OCI-LY7 (cell line): ENCODE measurements at regions of chr9 and their contacts with region 1.

Region 1: GRCh38 chr9:19456996-19457692 is 48.3 kb downstream of the ACER2 start:
- DNase-seq: peak; percentile 68
- H3K4me3 ChIP-seq: peak overlapping the region; percentile 41
- H3K27ac ChIP-seq: no peak overlapping the region
- H3K4me1 ChIP-seq: peaks cover 4% of the 10 kb centered on the region
- CTCF ChIP-seq: peak; percentile 96

Region 2: DNA sequence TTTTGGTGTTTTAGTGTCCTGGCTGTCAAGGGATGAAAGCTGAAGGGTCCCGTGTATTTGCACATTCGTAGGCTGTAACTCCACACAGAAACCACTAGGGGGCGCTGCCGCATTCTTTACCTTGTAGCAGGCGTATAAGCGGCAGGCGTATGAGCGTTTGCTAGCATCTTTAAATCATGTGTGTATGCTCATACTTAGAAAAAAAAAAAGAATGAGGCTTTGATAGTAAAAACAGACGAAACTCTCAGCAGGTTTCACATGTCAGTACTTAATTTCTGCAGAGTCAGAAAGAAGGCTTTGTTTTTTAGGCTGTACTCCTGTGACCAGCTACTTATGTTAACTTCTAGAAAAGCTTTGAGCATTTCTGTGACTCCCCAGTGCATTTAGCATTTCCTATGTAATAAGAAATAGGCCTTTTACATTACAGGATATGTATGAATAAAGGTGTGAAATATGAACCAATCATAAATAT is 1202.0 kb before region 1 on chr9:
- CTCF ChIA-PET with region 1: no interaction called
- POLR2A ChIA-PET with region 1: no interaction called
- intact Hi-C with region 1: loop called (anchors 2 kb)
- DNase-seq: peak; percentile 79
- H3K4me3 ChIP-seq: no peak overlapping the region
- H3K27ac ChIP-seq: no peak overlapping the region
- H3K4me1 ChIP-seq: no peaks in the 10 kb centered on the region
- CTCF ChIP-seq: peak; percentile 98

Region 3: GRCh38 chr9:19048966-19049916 is 407.9 kb before region 1 on chr9 and contains the start of gene RRAGA:
- CTCF ChIA-PET with region 1: interaction called, 7 read pairs
- POLR2A ChIA-PET with region 1: no interaction called
- intact Hi-C with region 1: loop called (anchors 1 kb)
- DNase-seq: peak; percentile 97
- H3K4me3 ChIP-seq: peak within 1 kb of the TSS; percentile 78
- H3K27ac ChIP-seq: peak within 1 kb of the TSS; percentile 87
- H3K4me1 ChIP-seq: peaks cover 28% of the 10 kb centered on the region
- CTCF ChIP-seq: peak; percentile 89
- total RNA-seq, gene RRAGA: 16.4 and 25.9 TPM in 2 replicates

Region 4: GRCh38 chr9:19085295-19085694 is 371.8 kb before region 1 on chr9:
- CTCF ChIA-PET with region 1: no interaction called
- POLR2A ChIA-PET with region 1: interaction called, 3 read pairs
- intact Hi-C with region 1: loop called (anchors 5 kb)
- DNase-seq: peak; percentile 27
- H3K4me3 ChIP-seq: no peak overlapping the region
- H3K27ac ChIP-seq: no peak overlapping the region
- H3K4me1 ChIP-seq: no peaks in the 10 kb centered on the region
- CTCF ChIP-seq: peak; percentile 78

Region 5: DNA sequence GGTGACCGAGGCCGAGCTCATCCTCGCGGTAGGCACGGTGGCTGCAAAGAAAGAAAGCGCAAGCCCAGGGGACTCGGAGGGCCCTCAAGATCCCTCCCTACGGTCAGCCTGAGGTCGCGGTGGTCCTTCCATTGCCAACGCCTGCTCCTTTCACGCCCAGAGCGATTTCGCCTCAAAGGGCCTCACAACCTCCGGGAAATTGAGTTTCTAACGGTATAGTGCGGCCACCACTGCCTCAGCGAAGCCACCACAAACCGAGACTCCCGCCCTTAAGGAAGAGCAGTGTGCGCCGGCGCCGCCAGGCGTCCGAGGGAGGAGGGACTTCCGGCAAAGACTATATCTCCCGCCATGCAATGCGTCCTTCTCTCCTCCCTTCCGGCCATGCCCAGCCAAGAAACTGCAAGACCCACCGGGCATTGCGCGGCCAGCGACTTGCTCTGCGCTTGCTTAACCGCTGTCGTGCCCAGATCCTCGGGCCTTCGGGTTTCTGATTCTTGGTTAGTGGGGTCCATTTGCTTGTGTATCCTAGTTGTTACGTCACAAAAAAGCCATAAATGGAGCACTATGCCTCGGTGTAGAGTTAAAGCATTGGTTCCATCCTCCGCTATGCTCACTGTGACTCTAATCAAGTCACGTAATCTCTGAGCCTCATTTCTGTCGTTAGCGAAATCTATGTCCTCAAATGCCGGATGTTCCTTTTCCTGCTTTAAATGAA is 354.4 kb before region 1 on chr9 and contains the start of gene HAUS6:
- CTCF ChIA-PET with region 1: no interaction called
- POLR2A ChIA-PET with region 1: interaction called, 3 read pairs
- intact Hi-C with region 1: loop called (anchors 5 kb)
- DNase-seq: peak; percentile 96
- H3K4me3 ChIP-seq: peak within 1 kb of the TSS; percentile 84
- H3K27ac ChIP-seq: peak within 1 kb of the TSS; percentile 75
- H3K4me1 ChIP-seq: peaks cover 21% of the 10 kb centered on the region
- CTCF ChIP-seq: no peak
- total RNA-seq, gene HAUS6: 25.7 and 32.8 TPM in 2 replicates

Region 6: DNA sequence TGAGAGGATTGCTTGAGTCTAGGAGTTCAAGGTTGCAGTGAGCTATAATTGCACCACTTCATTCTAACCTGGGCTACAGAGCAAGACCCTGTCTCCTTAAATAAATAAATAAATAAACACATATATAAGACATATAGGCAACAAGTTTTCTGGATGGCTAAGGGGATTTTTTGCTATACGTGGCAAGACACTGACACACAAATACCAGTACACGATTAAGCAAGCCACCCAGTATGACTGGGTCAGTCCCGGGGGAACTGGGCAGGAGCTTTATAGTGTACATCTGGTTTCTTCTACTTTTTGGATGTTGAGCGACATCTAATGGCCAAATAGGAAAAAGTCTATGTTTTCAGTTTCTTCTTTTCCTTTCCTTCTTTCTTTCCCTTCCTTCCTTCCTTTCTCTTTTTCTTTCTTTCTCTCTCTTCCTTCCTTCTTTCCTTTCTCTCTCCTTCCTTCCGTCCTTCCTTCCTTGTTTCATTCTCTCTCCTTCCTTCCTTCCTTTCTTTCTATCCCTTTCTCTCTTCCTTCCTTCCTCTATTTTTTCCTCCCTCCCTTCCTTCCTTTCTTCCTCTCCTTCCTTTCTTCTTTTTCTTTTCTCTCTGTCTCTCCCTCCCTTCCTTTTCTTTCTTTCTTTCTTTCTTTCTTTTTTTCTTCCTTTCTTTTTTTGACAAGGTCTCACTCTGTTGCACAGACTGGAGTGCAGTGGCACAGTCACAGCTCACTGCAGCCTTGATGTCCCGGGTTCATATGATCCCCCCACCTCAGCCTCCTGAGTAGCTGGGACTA is 282.8 kb before region 1 on chr9:
- CTCF ChIA-PET with region 1: no interaction called
- POLR2A ChIA-PET with region 1: interaction called, 5 read pairs
- intact Hi-C with region 1: loop called (anchors 2 kb)
- DNase-seq: peak; percentile 81
- H3K4me3 ChIP-seq: no peak overlapping the region
- H3K27ac ChIP-seq: no peak overlapping the region
- H3K4me1 ChIP-seq: peaks cover 20% of the 10 kb centered on the region
- CTCF ChIP-seq: peak; percentile 86

Region 7: GRCh38 chr9:19379697-19380046 is 77.5 kb before region 1 on chr9:
- CTCF ChIA-PET with region 1: no interaction called
- POLR2A ChIA-PET with region 1: interaction called, 3 read pairs
- intact Hi-C with region 1: loop called (anchors 1 kb)
- DNase-seq: peak; percentile 51
- H3K4me3 ChIP-seq: peak overlapping the region; percentile 96
- H3K27ac ChIP-seq: peak overlapping the region; percentile 75
- H3K4me1 ChIP-seq: peaks cover 42% of the 10 kb centered on the region
- CTCF ChIP-seq: no peak